ENCODE measurements at regions of chr11 and their contacts with region 1.

Region 1: GRCh38 chr11:7986768-7987559 is at the start of gene EIF3F:
- DNase-seq: peak; percentile 95
- ATAC-seq: peak; percentile 97
- H3K4me3 Mint-ChIP-seq: peak within 1 kb of the TSS; percentile 96
- H3K27ac Mint-ChIP-seq: peak within 1 kb of the TSS; percentile 92
- H3K4me1 Mint-ChIP-seq: peaks cover 44% of the 10 kb centered on the region
- H3K27me3 Mint-ChIP-seq: no peaks in the 10 kb centered on the region
- total RNA-seq, gene EIF3F: 192 to 234 TPM

Region 2: GRCh38 chr11:7892840-7893254 is 94.1 kb before region 1 on chr11:
- CTCF ChIA-PET with region 1: interaction called, 48 read pairs
- DNase-seq: no peak
- ATAC-seq: peak; percentile 76
- H3K4me3 Mint-ChIP-seq: no peak overlapping the region
- H3K27ac Mint-ChIP-seq: no peak overlapping the region
- H3K4me1 Mint-ChIP-seq: peaks cover 8% of the 10 kb centered on the region
- H3K27me3 Mint-ChIP-seq: peaks cover 15% of the 10 kb centered on the region

Region 3: DNA sequence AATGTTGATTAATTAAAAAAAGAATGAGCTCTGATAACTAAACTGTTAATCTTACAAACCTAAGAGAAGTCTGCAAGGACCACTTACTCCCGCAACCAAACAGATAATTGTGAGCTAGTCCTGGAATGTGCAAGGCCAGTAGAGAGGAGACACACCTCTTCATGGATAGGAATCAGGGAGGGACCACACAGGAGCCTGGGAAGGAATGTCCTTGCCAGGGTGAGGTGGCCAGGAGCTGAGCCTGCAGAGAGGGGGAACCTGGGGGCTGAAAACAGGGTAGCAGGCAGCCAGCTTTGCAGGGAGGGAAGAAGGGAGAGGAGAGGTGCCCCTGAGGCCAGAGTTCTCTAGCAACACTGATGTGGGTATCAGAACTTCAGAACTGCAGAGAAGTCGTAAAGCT is 12.3 kb before region 1 on chr11:
- CTCF ChIA-PET with region 1: interaction called, 12 read pairs
- DNase-seq: no peak
- ATAC-seq: no peak
- H3K4me3 Mint-ChIP-seq: no peak overlapping the region
- H3K27ac Mint-ChIP-seq: no peak overlapping the region
- H3K4me1 Mint-ChIP-seq: peaks cover 1% of the 10 kb centered on the region
- H3K27me3 Mint-ChIP-seq: peaks cover 5% of the 10 kb centered on the region

Measured in activated CD8-positive, alpha-beta memory T cell treated with anti-CD3 and anti-CD28 coated beads, Interleukin-2, amount 10 ng/mL, durations not matched to agents 7 days and 5 days (primary cell).